ENCODE measurements at regions of chr1 and their contacts with region 1.

Region 1: GRCh38 chr1:28248283-28249012 is 10.9 kb upstream of the SESN2 start:
- DNase-seq: peak; percentile 75
- H3K4me3 Mint-ChIP-seq: peak overlapping the region; percentile 92
- H3K27ac Mint-ChIP-seq: peak overlapping the region; percentile 96
- H3K4me1 Mint-ChIP-seq: peaks cover 43% of the 10 kb centered on the region
- H3K27me3 Mint-ChIP-seq: no peaks in the 10 kb centered on the region

Region 2: GRCh38 chr1:28259307-28260167 is 11.1 kb after region 1 on chr1 and contains the start of gene SESN2:
- intact Hi-C with region 1: loop called (anchors 1 kb)
- DNase-seq: peak; percentile 99
- H3K4me3 Mint-ChIP-seq: peak within 1 kb of the TSS; percentile 74
- H3K27ac Mint-ChIP-seq: peak within 1 kb of the TSS; percentile 88
- H3K4me1 Mint-ChIP-seq: peaks cover 38% of the 10 kb centered on the region
- H3K27me3 Mint-ChIP-seq: peaks cover 3% of the 10 kb centered on the region
- total RNA-seq, gene SESN2: 7.1 and 7.9 TPM in 2 replicates

Region 3: DNA sequence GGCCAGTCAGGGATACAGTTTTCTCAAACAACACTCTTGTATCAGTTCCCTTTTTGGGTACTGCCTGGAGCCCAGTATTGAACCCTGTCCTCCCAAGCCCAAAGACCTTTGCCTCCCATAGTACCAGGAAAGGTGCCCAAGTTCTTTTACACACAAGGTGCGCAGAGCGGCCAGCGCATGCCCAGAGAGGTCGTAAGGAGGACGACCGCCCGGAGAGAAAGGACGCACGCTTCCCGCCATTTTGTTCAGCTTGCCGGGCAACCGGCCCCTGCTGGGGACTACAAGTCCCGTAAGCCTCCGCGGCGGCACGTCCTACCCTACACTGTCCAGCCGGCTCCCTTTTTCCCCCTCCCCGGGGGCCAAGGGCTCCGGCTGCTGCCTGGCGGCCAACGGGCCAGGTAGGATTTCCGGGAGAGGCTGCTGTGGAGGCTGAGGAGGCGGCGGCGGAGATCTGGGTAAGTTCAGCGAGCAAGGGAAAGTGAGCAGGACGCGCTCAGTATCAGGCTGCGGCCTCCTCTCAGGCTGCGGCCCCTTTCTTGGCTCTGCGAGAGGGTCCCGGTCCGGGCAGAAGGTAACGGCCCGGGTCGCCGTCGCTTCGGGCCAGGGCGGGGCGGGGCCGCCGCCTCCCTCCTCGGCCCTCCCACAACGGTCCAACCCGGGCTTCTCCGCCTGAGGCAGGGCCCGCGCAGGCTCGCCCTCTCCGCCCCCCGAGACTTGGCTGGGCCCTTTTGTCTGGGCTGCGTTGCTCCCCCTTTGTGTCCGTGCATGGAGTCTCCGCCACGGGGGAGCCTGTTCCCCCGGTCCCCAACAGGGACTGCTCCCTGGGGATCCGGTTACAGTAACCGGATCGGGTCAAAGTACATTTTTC is 121.2 kb after region 1 on chr1 and contains the start of gene PHACTR4:
- intact Hi-C with region 1: loop called (anchors 2 kb)
- DNase-seq: peak; percentile 77
- H3K4me3 Mint-ChIP-seq: peak within 1 kb of the TSS; percentile 91
- H3K27ac Mint-ChIP-seq: peak within 1 kb of the TSS; percentile 93
- H3K4me1 Mint-ChIP-seq: peaks cover 26% of the 10 kb centered on the region
- H3K27me3 Mint-ChIP-seq: no peaks in the 10 kb centered on the region
- total RNA-seq, gene PHACTR4: 30.2 and 32.1 TPM in 2 replicates

Region 4: DNA sequence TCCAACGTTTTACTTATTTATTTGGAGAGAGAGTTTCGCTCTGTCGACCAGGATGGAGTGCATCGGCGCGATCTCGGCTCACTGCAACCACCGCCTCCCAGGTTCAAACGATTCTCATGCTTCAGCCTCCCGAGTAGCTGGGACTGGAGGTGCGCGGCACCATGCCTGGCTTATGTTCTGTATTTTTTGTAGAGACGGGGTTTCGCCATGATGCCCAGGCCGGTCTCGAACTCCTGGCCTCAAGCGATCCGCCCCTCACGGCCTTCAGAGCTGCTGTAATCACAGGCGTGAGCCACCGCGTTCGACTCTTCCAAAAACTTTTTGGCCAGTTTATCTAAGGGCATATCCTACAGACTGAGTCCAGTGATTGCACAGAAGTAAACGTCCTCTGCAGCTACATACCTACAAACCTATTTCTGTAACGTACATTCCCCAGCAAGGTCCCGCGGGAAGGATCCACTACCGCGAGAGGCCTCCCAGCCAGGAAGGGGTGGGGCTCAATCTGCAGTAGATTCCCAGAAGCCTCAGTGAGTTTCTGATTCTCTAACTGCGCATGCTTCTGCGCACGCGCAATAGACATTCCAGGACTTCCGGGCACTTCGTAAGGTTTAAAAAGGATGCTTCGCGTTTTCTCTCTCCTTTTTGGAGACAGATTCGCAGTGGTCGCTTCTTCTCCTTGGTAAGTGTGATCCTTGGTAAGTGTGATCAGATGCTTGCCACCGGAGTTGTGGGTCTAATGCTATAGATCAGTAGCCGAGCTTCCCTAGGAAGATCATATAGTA is 257.1 kb after region 1 on chr1 and contains the start of gene RCC1:
- intact Hi-C with region 1: loop called (anchors 5 kb)
- DNase-seq: peak; percentile 96
- H3K4me3 Mint-ChIP-seq: peak within 1 kb of the TSS; percentile 100
- H3K27ac Mint-ChIP-seq: peak within 1 kb of the TSS; percentile 99
- H3K4me1 Mint-ChIP-seq: peaks cover 29% of the 10 kb centered on the region
- H3K27me3 Mint-ChIP-seq: no peaks in the 10 kb centered on the region
- total RNA-seq, gene RCC1: 128 and 136 TPM in 2 replicates

Measured in activated T-helper 2 cell treated with anti-CD3 and anti-CD28 coated beads, Interferon-gamma antibody, Interleukin-2, Interleukin-4, amounts not matched to agents 10 μg/mL and 5 μg/mL and 100 μg/mL, durations not matched to agents 14 hours and 24 hours and 36 hours (primary cell).